ENCODE measurements at regions of chr10 and their contacts with region 1.

Region 1: GRCh38 chr10:68901104-68901927 is at the start of gene DDX50:
- DNase-seq: peak; percentile 99
- H3K4me3 ChIP-seq: peak within 1 kb of the TSS; percentile 62 to 92 (median 79)
- H3K27ac ChIP-seq: peak within 1 kb of the TSS; percentile 94
- H3K4me1 ChIP-seq: peaks cover 14% of the 10 kb centered on the region
- H3K27me3 ChIP-seq: no peaks in the 10 kb centered on the region
- CTCF ChIP-seq: peak in 1 of 2 donors; percentile 14
- POLR2A ChIP-seq: peak; percentile 91
- total RNA-seq, gene DDX50: 25.9 and 28.2 TPM in 2 replicates

Region 2: GRCh38 chr10:67788025-67788886 is 1113.1 kb before region 1 on chr10:
- CTCF ChIA-PET with region 1: interaction called, 10 read pairs
- POLR2A ChIA-PET with region 1: no interaction called
- dilution Hi-C with region 1: no loop called
- intact Hi-C with region 1: no loop called
- DNase-seq: peak; percentile 26
- H3K4me3 ChIP-seq: no peak overlapping the region
- H3K27ac ChIP-seq: no peak overlapping the region
- H3K4me1 ChIP-seq: no peaks in the 10 kb centered on the region
- H3K27me3 ChIP-seq: peaks cover 0 to 5% of the 10 kb centered on the region in 2 experiments
- CTCF ChIP-seq: peak; percentile 72 to 77
- POLR2A ChIP-seq: no peak

Region 3: GRCh38 chr10:68550747-68551411 is 350.4 kb before region 1 on chr10:
- CTCF ChIA-PET with region 1: interaction called, 36 read pairs
- POLR2A ChIA-PET with region 1: no interaction called
- dilution Hi-C with region 1: no loop called
- intact Hi-C with region 1: loop called (anchors 1 kb)
- DNase-seq: peak; percentile 62
- H3K4me3 ChIP-seq: no peak overlapping the region
- H3K27ac ChIP-seq: no peak overlapping the region
- H3K4me1 ChIP-seq: no peaks in the 10 kb centered on the region
- H3K27me3 ChIP-seq: no peaks in the 10 kb centered on the region
- CTCF ChIP-seq: peak; percentile 70 to 75
- POLR2A ChIP-seq: no peak

Region 4: DNA sequence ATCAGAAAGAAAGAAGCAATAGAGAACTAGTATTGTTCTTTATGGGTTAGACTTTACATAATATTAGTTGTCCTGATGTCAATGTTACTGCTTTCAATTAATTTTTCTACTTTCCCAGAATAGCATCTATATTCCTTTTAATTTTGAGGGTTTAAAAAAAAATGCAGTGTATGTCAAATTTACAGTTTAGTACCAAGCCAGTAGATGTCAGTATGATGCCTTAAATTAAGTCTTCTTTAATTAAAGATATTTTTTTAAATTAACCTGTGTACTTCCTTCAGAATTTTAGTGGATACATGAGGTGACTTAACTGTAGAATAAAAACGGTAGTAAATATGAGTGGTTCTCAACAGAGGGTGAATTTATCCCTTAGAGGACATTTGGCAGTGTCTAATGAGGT is 109.2 kb before region 1 on chr10:
- CTCF ChIA-PET with region 1: interaction called, 4 read pairs
- POLR2A ChIA-PET with region 1: interaction called, 3 read pairs
- dilution Hi-C with region 1: no loop called
- intact Hi-C with region 1: loop called (anchors 1 kb)
- DNase-seq: peak; percentile 8
- H3K4me3 ChIP-seq: no peak overlapping the region
- H3K27ac ChIP-seq: no peak overlapping the region
- H3K4me1 ChIP-seq: no peaks in the 10 kb centered on the region
- H3K27me3 ChIP-seq: no peaks in the 10 kb centered on the region
- CTCF ChIP-seq: no peak
- POLR2A ChIP-seq: no peak

Region 5: DNA sequence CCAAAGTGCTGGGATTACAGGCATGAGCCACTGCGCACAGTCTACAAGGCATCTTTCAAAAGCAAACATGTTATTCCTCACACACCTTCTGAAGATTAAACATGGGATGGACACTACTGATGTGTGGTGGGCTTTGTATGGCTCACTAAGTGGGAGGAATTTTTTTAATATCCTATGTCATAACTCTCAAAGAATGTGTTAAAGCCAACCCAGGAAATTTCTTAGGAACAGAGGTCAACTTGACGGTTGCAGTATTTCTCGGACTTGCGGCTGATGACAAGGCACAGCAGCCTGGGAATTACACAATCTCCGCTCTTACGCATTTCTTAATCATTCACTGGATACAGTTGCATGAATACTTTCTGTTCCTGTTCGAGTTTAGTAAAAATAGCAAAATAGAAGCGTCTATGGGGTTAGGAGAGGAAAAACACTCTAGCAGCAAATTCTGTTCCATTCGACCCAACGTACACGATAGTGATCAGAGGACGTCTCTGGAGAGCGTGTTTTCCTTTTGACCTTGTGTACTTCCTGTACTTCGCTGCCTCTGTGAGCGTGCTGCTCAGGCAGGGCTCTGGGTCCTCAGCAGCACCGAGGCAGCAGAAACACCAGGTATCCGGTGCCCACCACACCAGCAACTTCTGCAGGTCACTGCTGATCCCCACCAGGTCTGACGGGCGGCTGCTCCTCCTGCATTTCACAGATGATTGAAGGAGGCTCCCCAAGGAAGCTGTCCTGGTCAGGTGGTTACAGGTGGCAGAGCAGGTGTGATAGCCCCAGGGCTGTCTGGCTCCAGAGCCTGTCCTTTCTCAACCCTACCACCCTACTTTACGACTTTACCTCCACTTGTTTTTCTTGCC is 160.2 kb after region 1 on chr10:
- CTCF ChIA-PET with region 1: no interaction called
- POLR2A ChIA-PET with region 1: no interaction called
- dilution Hi-C with region 1: no loop called
- intact Hi-C with region 1: loop called (anchors 1 kb)
- DNase-seq: peak; percentile 96
- H3K4me3 ChIP-seq: peak overlapping the region in 2 of 3 experiments; percentile 16 to 45
- H3K27ac ChIP-seq: peak overlapping the region; percentile 91
- H3K4me1 ChIP-seq: peaks cover 58% of the 10 kb centered on the region
- H3K27me3 ChIP-seq: no peaks in the 10 kb centered on the region
- CTCF ChIP-seq: no peak
- POLR2A ChIP-seq: peak; percentile 55